ENCODE measurements at regions of chr7 and their contacts with region 1.

Region 1: DNA sequence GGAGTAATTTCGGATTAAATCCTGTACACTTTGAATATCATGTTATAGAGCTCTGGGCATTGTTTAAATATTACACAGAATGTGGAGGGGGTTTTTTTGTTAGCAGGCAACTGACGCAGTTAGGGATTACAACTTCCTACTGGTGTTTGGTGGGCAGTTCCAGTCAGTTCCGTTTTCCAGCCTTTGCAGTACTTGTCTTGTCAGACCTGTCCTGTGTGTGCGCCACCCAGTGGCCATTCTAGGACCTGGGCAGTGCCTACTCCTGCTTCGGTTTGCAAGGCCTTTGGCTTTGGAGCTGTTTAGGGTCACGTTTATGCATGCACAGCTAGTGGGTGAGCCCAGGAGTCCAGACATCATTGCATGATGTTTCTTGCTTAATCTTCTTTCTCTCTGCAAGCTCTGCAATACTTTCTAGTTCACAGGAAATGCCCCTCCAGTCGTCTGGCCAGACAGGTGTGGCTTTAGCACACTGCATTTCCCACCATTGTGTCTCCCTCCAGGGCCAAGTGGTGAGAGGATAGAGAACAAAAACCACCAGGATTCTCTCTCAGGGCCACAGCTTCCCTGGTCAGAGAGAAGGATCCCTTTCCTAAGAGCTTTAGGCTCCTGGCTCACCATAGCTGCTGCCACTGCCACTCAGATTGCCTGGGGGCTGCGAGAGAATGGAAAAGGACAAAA is 96.5 kb upstream of the TARP start:
- DNase-seq: peak; percentile 40
- H3K4me3 ChIP-seq: no peak overlapping the region
- CTCF ChIP-seq: peak; percentile 89

Region 2: GRCh38 chr7:37901236-37901827 is 468.6 kb before region 1 on chr7:
- CTCF ChIA-PET with region 1: interaction called, 19 read pairs
- POLR2A ChIA-PET with region 1: no interaction called
- DNase-seq: no peak
- H3K4me3 ChIP-seq: no peak overlapping the region
- CTCF ChIP-seq: peak; percentile 42

Region 3: DNA sequence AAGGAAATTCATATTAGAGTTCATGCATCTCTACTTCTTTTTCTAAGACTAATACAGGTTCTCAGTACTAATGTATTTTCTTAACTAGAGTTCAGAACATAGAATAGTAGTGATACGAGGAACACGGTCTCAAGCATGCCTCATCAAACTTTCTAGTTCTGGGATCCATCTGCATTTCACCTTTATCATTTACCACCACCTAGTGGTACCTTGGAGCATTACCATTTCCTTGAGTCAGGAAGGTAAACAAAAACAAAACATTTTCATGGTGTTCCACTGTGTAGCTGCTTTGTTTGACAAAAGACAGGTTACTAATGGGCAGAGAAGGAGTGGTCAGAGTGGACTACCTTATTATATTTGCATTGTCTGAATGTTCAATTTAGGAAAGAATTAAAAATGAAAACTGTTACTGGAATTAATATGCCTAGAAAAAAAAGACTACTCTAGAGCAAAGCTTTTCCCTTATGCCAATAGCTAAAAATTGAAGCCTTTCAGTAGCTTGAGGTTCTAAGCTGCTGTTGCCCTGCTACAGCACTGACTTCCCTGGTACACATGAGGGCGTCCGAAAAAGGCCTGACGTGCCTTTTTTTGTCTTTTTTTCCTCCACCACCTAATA is 147.4 kb before region 1 on chr7:
- CTCF ChIA-PET with region 1: interaction called, 66 read pairs
- POLR2A ChIA-PET with region 1: no interaction called
- DNase-seq: no peak
- H3K4me3 ChIP-seq: no peak overlapping the region
- CTCF ChIP-seq: peak; percentile 63

Region 4: GRCh38 chr7:38351601-38352000 is 18.4 kb before region 1 on chr7:
- CTCF ChIA-PET with region 1: interaction called, 67 read pairs
- POLR2A ChIA-PET with region 1: no interaction called
- DNase-seq: no peak
- H3K4me3 ChIP-seq: no peak overlapping the region
- CTCF ChIP-seq: no peak

Region 5: DNA sequence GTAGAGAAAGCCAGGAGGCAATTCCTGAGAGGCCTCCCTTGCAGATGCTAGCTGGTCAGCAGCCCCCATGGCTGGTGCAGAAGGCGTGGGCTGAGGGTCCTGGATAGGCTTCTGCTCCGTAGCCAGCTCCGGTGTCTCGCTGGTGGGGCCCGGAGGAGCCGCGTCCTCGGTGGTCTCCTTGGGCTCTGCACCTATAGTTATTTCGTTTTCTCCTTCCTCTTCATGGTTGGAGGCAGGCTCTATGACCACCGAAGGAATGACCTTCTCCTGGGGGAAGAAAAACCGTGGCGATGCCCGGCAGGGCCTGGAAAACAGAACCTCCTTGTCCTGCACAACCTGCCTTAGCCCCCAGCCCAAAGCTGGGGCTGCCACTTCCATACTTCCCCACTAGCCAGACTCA is 21.8 kb after region 1 on chr7:
- CTCF ChIA-PET with region 1: interaction called, 226 read pairs
- POLR2A ChIA-PET with region 1: no interaction called
- DNase-seq: no peak
- H3K4me3 ChIP-seq: no peak overlapping the region
- CTCF ChIP-seq: no peak

Region 6: GRCh38 chr7:38660427-38661099 is 290.6 kb after region 1 on chr7:
- CTCF ChIA-PET with region 1: interaction called, 10 read pairs
- POLR2A ChIA-PET with region 1: no interaction called
- DNase-seq: no peak
- H3K4me3 ChIP-seq: no peak overlapping the region
- CTCF ChIP-seq: peak; percentile 83

Measured in AG04449 (cell line).